ENCODE measurements at regions of chr12 and their contacts with region 1.

Region 1: GRCh38 chr12:71746983-71747611 is 7.6 kb upstream of the RAB21 start:
- DNase-seq: peak; percentile 45
- ATAC-seq: peak; percentile 95
- H3K4me3 ChIP-seq: no peak overlapping the region
- H3K27ac ChIP-seq: no peak overlapping the region
- H3K4me1 ChIP-seq: no peaks in the 10 kb centered on the region
- H3K27me3 ChIP-seq: no peaks in the 10 kb centered on the region; a peak in 1 of 4 replicates
- CTCF ChIP-seq: peak; percentile 67 to 85 (median 80)
- EP300 ChIP-seq: no peak
- POLR2A ChIP-seq: no peak
- RAD21 ChIP-seq: peak; percentile 97

Region 2: GRCh38 chr12:71392521-71393145 is 354.5 kb before region 1 on chr12:
- CTCF ChIA-PET with region 1: interaction called, 13 read pairs
- POLR2A ChIA-PET with region 1: no interaction called
- RAD21 ChIA-PET with region 1: interaction called, 12 read pairs
- SMC1A ChIA-PET with region 1: interaction called, 9 read pairs
- in situ Hi-C with region 1: no loop called
- intact Hi-C with region 1: no loop called
- DNase-seq: peak; percentile 12
- ATAC-seq: peak; percentile 93
- H3K4me3 ChIP-seq: no peak overlapping the region
- H3K27ac ChIP-seq: no peak overlapping the region
- H3K4me1 ChIP-seq: no peaks in the 10 kb centered on the region
- H3K27me3 ChIP-seq: no peaks in the 10 kb centered on the region
- CTCF ChIP-seq: peak; percentile 79 to 86 (median 84)
- EP300 ChIP-seq: no peak
- POLR2A ChIP-seq: no peak
- RAD21 ChIP-seq: peak; percentile 52

Region 3: DNA sequence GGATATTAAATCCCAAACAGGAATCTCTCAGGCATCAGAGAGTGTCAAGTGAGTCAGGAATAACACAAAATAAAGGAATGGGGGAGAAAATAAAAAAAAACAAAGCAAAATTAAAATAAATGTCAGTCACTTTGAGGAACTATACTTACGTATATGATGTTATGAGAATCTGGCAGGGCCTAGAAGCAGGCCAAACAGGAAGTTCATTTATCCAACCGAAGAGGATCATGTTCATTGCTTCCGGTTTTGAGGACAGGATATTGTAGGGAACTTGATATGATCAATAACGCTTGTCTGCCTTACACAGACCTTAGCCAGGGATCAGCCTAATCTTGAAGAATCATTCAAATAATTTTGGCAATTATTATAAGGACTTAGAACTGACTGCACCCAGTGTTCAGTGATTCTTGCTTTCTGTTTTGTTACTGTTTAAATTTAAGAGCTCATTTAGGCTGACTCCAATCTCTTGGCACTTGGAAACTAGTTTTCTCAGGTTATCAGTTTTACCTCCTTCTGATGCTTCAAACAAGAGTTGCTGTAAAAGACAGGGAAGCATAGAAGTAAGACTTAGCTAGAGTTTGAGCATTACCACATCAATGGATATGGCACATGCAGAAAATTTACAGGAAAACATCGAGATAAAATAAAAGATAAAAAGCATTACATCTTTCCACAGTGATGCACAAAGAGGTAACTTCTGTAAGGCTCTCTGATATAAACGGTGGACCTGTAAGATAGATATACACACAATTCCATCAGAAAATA is 136.9 kb before region 1 on chr12:
- CTCF ChIA-PET with region 1: interaction called, 11 read pairs
- POLR2A ChIA-PET with region 1: no interaction called
- RAD21 ChIA-PET with region 1: interaction called, 5 read pairs
- SMC1A ChIA-PET with region 1: interaction called, 4 read pairs
- in situ Hi-C with region 1: no loop called
- intact Hi-C with region 1: no loop called
- DNase-seq: no peak
- ATAC-seq: no peak
- H3K4me3 ChIP-seq: no peak overlapping the region
- H3K27ac ChIP-seq: no peak overlapping the region
- H3K4me1 ChIP-seq: no peaks in the 10 kb centered on the region
- H3K27me3 ChIP-seq: no peaks in the 10 kb centered on the region
- CTCF ChIP-seq: no peak
- EP300 ChIP-seq: no peak
- POLR2A ChIP-seq: no peak
- RAD21 ChIP-seq: no peak

Region 4: DNA sequence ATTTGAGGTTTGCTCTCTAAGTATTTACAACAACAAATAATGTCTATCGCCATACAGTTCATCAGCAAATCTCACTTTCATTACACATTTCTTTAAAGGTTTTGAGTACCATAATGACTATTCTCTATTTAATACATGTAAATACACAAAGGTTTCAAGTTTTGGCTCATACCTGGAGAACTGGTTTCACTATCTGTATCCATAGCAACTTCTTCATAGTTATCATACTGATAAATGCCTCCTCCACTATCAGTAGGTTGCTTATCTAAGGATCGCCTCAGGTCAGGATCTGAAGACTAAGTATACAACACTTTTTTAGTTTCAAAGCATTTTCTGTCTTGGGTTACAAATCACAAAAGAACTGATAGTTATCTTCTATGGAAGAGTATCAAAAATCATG is 104.8 kb before region 1 on chr12:
- CTCF ChIA-PET with region 1: interaction called, 75 read pairs
- POLR2A ChIA-PET with region 1: interaction called, 7 read pairs
- RAD21 ChIA-PET with region 1: interaction called, 52 read pairs
- SMC1A ChIA-PET with region 1: interaction called, 95 read pairs
- in situ Hi-C with region 1: no loop called
- intact Hi-C with region 1: loop called (anchors 1 kb)
- DNase-seq: no peak
- ATAC-seq: peak; percentile 44
- H3K4me3 ChIP-seq: no peak overlapping the region
- H3K27ac ChIP-seq: no peak overlapping the region
- H3K4me1 ChIP-seq: peaks cover 7% of the 10 kb centered on the region
- H3K27me3 ChIP-seq: no peaks in the 10 kb centered on the region
- CTCF ChIP-seq: no peak
- EP300 ChIP-seq: no peak
- POLR2A ChIP-seq: no peak
- RAD21 ChIP-seq: no peak

Region 5: GRCh38 chr12:71685914-71686665 is 61.0 kb before region 1 on chr12 and contains the start of gene TMEM19:
- CTCF ChIA-PET with region 1: interaction called, 131 read pairs
- POLR2A ChIA-PET with region 1: interaction called, 16 read pairs
- RAD21 ChIA-PET with region 1: interaction called, 139 read pairs
- SMC1A ChIA-PET with region 1: interaction called, 117 read pairs
- in situ Hi-C with region 1: no loop called
- intact Hi-C with region 1: loop called (anchors 2 kb)
- DNase-seq: peak; percentile 65
- ATAC-seq: peak; percentile 94
- H3K4me3 ChIP-seq: peak within 1 kb of the TSS; percentile 70
- H3K27ac ChIP-seq: peak within 1 kb of the TSS; percentile 77
- H3K4me1 ChIP-seq: peaks cover 14% of the 10 kb centered on the region
- H3K27me3 ChIP-seq: no peaks in the 10 kb centered on the region
- CTCF ChIP-seq: peak; percentile 25 to 60 (median 33); a peak in 4 of 6 replicates
- EP300 ChIP-seq: no peak
- POLR2A ChIP-seq: peak; percentile 86
- RAD21 ChIP-seq: peak; percentile 44
- polyA plus RNA-seq, gene TMEM19: 32.2 to 54.9 TPM

Region 6: DNA sequence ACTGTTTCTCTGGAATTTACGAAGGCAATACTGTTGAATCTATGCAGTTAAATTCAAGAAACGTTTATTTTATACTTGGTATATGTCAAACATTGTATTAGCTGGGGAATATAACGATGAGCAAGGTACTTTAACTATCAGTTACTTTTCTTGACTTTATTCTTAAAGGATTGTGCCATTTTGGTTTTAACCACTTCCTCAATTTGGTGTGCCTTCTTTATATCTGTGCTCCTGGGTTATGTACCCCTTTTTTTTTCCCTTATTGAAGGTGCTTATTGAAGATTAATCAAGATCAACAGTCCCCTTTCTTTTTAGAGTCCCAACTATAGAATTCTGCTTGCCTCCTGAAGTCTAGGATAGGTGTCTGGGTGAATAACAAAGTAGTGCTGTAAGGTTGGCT is 13.4 kb after region 1 on chr12:
- CTCF ChIA-PET with region 1: interaction called, 13 read pairs
- POLR2A ChIA-PET with region 1: interaction called, 3 read pairs
- RAD21 ChIA-PET with region 1: interaction called, 6 read pairs
- SMC1A ChIA-PET with region 1: interaction called, 8 read pairs
- in situ Hi-C with region 1: no loop called
- intact Hi-C with region 1: no loop called
- DNase-seq: no peak
- ATAC-seq: no peak; the same call in 2 of the 3 replicates
- H3K4me3 ChIP-seq: no peak overlapping the region
- H3K27ac ChIP-seq: no peak overlapping the region
- H3K4me1 ChIP-seq: no peaks in the 10 kb centered on the region
- H3K27me3 ChIP-seq: no peaks in the 10 kb centered on the region
- CTCF ChIP-seq: no peak
- EP300 ChIP-seq: no peak
- POLR2A ChIP-seq: no peak
- RAD21 ChIP-seq: no peak

Measured in GM12878 (cell line).